MCF 10A (cell line): ENCODE measurements at regions of chr2 and their contacts with region 1.

Region 1: GRCh38 chr2:86079981-86080911 is 25.4 kb downstream of the POLR1A start:
- DNase-seq: peak; percentile 68
- H3K4me3 Mint-ChIP-seq: no peak overlapping the region
- H3K27ac Mint-ChIP-seq: no peak overlapping the region
- H3K4me1 Mint-ChIP-seq: no peaks in the 10 kb centered on the region
- H3K27me3 Mint-ChIP-seq: no peaks in the 10 kb centered on the region
- CTCF ChIP-seq: peak; percentile 76

Region 2: GRCh38 chr2:85819811-85820510 is 260.3 kb before region 1 on chr2:
- CTCF ChIA-PET with region 1: interaction called, 165 read pairs
- POLR2A ChIA-PET with region 1: no interaction called
- intact Hi-C with region 1: no loop called
- DNase-seq: no peak
- H3K4me3 Mint-ChIP-seq: no peak overlapping the region
- H3K27ac Mint-ChIP-seq: no peak overlapping the region
- H3K4me1 Mint-ChIP-seq: no peaks in the 10 kb centered on the region
- H3K27me3 Mint-ChIP-seq: peaks cover 36% of the 10 kb centered on the region
- CTCF ChIP-seq: no peak

Region 3: DNA sequence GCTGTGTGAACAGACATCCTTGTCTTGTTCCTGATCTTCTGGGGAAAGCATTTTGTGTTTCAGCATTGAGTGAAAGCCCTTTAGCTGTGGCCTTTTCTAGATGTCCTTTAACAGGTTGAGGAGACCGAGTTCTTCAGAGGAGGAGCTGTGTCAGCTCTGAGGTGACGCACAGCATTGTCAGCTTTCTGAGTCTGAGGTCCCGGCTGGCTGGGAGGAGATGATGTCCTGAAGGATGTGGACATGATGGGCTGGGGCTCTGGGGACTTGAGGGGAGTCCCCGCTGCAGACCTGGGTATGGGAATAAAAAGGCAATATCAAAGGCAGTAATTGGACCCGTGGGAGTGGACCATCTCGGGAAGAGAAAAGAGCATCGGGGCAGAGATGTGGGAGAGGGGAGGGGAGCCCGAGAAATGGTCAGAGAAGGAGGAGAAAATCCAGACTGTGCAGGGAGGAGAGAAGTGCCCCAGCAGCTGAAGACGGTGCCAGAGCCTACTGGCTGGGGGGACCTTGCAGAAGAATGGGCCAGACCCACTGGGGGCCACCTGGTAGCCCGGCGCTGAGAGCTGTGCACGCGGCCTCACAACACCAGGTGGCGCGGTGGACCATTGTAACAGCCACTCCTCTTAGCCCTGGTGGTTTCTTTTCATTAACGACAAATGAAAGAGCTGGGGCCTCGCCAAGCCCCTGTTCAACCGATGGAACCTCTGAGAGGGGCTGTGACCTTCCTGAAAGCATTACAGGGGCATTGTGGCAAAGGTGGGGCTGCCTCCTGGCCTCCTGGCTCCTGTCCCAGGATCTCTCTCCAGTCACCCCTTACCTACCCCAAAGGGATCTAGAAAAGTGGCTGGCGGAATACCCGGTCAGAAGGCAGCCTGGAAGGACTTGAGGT is 253.0 kb before region 1 on chr2:
- CTCF ChIA-PET with region 1: interaction called, 165 read pairs
- POLR2A ChIA-PET with region 1: interaction called, 4 read pairs
- intact Hi-C with region 1: loop called (anchors 1 kb)
- DNase-seq: peak; percentile 74
- H3K4me3 Mint-ChIP-seq: no peak overlapping the region
- H3K27ac Mint-ChIP-seq: no peak overlapping the region
- H3K4me1 Mint-ChIP-seq: peaks cover 5% of the 10 kb centered on the region
- H3K27me3 Mint-ChIP-seq: peaks cover 7% of the 10 kb centered on the region
- CTCF ChIP-seq: peak; percentile 90